ENCODE measurements at regions of chr15 and their contacts with region 1.

Region 1: DNA sequence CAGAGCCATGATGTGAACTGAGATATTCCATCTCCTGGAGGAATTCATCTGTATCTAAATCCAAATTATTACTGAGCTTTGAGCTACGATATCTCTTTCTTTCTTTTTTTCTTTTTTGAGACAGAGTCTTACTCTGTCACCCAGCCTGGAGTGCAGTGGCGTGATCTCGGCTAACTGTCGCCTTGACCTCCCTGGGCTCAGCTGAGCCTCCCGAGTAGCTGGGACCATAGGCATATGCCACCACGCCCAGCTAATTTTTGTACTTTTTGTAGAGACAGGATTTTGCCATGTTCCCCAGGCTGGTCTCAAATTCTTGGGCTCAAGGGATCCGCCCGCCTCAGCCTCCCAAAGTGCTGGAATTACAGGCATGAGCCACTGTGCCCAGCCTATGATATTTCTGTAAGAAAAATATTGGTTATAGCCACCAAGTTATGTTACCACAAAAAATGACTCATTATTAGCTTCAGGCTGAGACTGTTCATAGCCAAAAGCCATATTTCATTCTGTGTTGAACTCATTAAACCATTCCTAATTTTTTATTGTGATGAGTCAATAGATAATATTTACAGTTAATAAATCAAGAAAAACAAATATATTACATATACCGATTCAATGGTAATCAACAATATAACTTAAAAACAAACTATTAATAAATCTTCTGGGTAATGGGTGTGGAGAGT is 27.1 kb upstream of the SLC30A4 start:
- DNase-seq: peak in 1 of 2 experiments; percentile 52
- H3K4me3 ChIP-seq: no peak overlapping the region
- H3K27ac ChIP-seq: no peak overlapping the region
- H3K4me1 ChIP-seq: no peaks in the 10 kb centered on the region
- H3K27me3 ChIP-seq: no peaks in the 10 kb centered on the region
- CTCF ChIP-seq: no peak

Region 2: GRCh38 chr15:46518381-46518780 is 968.7 kb after region 1 on chr15:
- CTCF ChIA-PET with region 1: no interaction called
- POLR2A ChIA-PET with region 1: interaction called, 10 read pairs
- intact Hi-C with region 1: no loop called
- DNase-seq: no peak
- H3K4me3 ChIP-seq: no peak overlapping the region
- H3K27ac ChIP-seq: no peak overlapping the region
- H3K4me1 ChIP-seq: no peaks in the 10 kb centered on the region
- H3K27me3 ChIP-seq: no peaks in the 10 kb centered on the region
- CTCF ChIP-seq: no peak